Dorsolateral prefrontal cortex (tissue), 120 donors: ENCODE measurements at regions of chr3 and their contacts with region 1.

Region 1: DNA sequence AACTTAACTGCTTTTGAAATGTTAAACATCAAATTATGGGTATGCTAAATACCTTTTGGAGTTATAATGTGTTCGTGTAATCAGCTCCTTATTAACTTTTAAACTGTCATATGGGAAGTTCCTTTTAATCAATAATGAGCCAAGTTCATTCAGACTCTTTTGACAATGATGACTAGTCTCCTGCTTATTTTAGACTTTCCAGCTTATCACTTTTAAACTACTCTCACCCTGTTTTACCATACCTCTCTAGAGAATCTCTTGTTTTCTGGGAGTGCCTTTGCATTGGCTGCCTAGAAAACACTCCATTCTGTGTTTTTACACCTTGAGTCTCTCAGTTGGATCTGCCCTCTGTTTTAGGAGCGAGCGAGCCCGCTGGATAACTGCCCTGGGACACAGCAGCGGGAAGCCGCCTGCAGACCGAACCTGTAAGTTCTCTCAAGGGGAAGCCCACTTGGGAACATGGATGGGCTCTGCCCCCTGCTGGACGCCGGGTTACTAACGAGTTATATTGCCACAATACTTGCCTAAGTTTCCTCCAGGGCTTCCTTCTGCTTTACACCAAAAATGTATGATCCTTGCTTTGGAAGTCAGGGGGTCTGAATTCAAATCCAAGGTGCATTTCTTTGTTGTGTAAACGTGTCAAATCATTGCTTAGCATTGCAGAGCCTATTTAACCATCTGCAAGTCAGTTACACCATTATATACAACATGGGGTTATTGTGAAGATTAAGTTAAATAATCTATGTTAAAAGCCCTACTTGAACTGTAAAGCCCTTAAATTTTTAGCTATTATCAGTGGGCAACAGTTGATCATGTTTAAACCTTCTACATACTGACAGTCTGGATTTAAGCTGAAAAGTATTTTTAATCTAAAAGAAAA is 71.3 kb downstream of the DHX36 start:
- DNase-seq: peak; percentile 53 to 96 (median 88)
- H3K4me3 ChIP-seq: peak overlapping the region in 1 of 59 donors; percentile 3
- H3K27ac ChIP-seq: no peak overlapping the region
- H3K27me3 ChIP-seq: no peaks in the 10 kb centered on the region
- CTCF ChIP-seq: peak; percentile 72 to 97 (median 90)

Region 2: GRCh38 chr3:153038779-153039178 is 1214.2 kb before region 1 on chr3:
- intact Hi-C with region 1: loop called (anchors 10 kb)
- DNase-seq: no peak
- H3K4me3 ChIP-seq: no peak overlapping the region
- H3K27ac ChIP-seq: no peak overlapping the region
- H3K27me3 ChIP-seq: peaks cover 0 to 5% (median 0%) of the 10 kb centered on the region in 45 donors
- CTCF ChIP-seq: no peak

Region 3: GRCh38 chr3:153043729-153044328 is 1209.2 kb before region 1 on chr3:
- intact Hi-C with region 1: loop called (anchors 10 kb)
- DNase-seq: no peak
- H3K4me3 ChIP-seq: peak overlapping the region in 11 of 59 donors; percentile 36 to 56 (median 46)
- H3K27ac ChIP-seq: no peak overlapping the region
- H3K27me3 ChIP-seq: peaks cover 0 to 5% (median 0%) of the 10 kb centered on the region in 45 donors
- CTCF ChIP-seq: no peak

Region 4: GRCh38 chr3:154003649-154004048 is 249.3 kb before region 1 on chr3:
- intact Hi-C with region 1: loop called in 1 of 2 experiments (anchors 10 kb)
- DNase-seq: no peak
- H3K4me3 ChIP-seq: no peak overlapping the region
- H3K27ac ChIP-seq: no peak overlapping the region
- H3K27me3 ChIP-seq: no peaks in the 10 kb centered on the region
- CTCF ChIP-seq: no peak

Region 5: GRCh38 chr3:154095832-154096421 is 157.1 kb before region 1 on chr3:
- intact Hi-C with region 1: loop called (anchors 2 to 10 kb)
- DNase-seq: no peak
- H3K4me3 ChIP-seq: no peak overlapping the region
- H3K27ac ChIP-seq: no peak overlapping the region
- H3K27me3 ChIP-seq: no peaks in the 10 kb centered on the region
- CTCF ChIP-seq: peak; percentile 14 to 73 (median 49)

Region 6: GRCh38 chr3:154304116-154304786 is 51.3 kb after region 1 on chr3:
- intact Hi-C with region 1: no loop called
- DNase-seq: no peak
- H3K4me3 ChIP-seq: no peak overlapping the region
- H3K27ac ChIP-seq: no peak overlapping the region
- H3K27me3 ChIP-seq: no peaks in the 10 kb centered on the region
- CTCF ChIP-seq: no peak